ENCODE measurements at regions of chr9 and their contacts with region 1.

Region 1: GRCh38 chr9:28289746-28290145 is 716.5 kb upstream of the C9orf72 start:
- DNase-seq: no peak
- ATAC-seq: no peak
- H3K4me3 ChIP-seq: no peak overlapping the region
- H3K27ac ChIP-seq: no peak overlapping the region
- H3K4me1 ChIP-seq: no peaks in the 10 kb centered on the region
- H3K27me3 ChIP-seq: no peaks in the 10 kb centered on the region
- CTCF ChIP-seq: no peak
- POLR2A ChIP-seq: no peak

Region 2: GRCh38 chr9:28234894-28235277 is 54.9 kb before region 1 on chr9:
- in situ Hi-C with region 1: loop called in 1 of 4 experiments (anchors 10 kb)
- intact Hi-C with region 1: no loop called
- DNase-seq: no peak
- ATAC-seq: no peak
- H3K4me3 ChIP-seq: no peak overlapping the region
- H3K27ac ChIP-seq: no peak overlapping the region
- H3K4me1 ChIP-seq: no peaks in the 10 kb centered on the region
- H3K27me3 ChIP-seq: no peaks in the 10 kb centered on the region
- CTCF ChIP-seq: no peak
- POLR2A ChIP-seq: no peak

Measured in gastrocnemius medialis (tissue), 4 donors.